HEK293T (cell line): ENCODE measurements at regions of chr10 and their contacts with region 1.

Region 1: DNA sequence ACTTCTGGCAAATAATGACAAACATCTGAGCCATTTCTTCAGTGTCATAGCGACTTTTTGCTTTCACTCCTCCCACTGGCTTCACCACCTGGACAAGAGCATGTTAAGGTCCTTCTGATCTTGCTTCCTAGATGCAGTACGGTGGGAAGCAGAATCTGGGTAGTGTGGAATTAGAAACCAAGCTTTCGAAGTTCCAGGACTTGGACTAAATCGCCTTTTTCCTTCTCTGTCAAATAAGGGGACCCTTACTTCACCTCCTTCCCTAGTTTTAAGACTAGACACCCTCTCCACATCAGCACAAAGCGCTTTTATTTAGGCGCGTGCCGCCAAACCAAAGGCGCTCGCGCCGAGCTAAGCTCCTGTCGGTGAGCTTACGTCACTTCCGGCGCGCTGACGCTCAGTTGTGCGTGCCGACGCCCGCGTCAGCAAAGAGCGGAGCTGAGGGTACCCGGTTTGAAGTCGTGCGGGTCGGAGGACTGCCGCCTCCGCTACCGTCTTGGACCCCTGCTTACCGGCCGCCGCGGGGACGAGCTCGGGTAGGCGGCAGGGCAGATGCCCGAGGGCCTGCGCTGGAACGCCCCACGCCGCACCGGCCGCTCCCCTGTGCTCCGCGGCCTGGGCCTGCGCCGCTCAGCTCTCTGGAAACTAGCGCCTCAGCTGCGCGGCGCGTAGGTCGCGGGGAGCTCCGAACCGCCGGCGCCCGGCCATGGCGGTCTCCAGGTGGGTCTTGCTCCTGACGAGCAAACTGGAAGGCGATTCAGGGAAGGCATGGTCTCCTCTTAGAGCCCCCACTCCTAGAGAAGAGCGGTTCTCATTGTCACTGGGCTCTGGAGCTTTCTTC is at the start of gene BTAF1:
- DNase-seq: peak; percentile 92

Region 2: DNA sequence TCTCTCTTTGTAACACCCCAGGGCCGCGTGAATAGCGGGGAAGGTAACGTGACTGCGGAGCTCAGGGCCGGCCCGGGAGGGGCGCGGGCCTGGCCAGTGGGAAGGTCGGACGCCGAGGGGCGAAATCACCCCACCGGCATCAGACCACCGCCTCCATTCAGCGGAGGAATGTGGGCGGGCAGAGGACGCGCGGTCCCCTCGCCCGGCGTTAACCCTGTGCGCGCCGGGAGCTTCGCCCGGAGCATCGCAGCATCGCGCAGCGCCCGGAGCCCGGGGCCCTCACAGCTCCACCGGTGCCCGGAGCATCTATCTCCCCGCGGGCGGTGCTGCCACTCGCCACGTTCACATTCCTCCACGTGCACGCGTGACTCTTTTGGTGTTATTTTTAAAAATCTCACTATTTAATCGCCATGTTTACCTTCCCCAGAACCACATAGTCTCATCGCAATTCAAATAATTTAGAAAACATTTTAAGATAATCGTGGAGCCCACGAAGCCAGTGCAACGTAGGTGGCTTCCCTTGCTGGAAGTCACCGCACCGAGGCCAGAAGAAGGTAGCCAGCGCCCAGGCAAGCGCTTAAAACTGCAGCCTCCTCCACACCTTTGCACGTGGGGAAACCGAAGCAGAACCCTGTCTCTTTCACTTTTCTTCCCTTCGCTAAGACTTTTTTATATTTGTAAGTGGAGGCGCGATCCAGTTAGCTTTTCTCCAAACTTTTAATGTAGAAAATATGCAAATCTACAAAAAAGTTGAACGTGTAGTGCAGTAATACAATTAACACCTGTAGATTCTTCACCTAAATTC is 36.1 kb before region 1 on chr10:
- CTCF ChIA-PET with region 1: no interaction called
- POLR2A ChIA-PET with region 1: interaction called, 15 read pairs
- DNase-seq: peak; percentile 63

Region 3: GRCh38 chr10:91908337-91909116 is 15.1 kb before region 1 on chr10:
- CTCF ChIA-PET with region 1: interaction called, 6 read pairs
- POLR2A ChIA-PET with region 1: interaction called, 17 read pairs
- DNase-seq: peak; percentile 80

Region 4: DNA sequence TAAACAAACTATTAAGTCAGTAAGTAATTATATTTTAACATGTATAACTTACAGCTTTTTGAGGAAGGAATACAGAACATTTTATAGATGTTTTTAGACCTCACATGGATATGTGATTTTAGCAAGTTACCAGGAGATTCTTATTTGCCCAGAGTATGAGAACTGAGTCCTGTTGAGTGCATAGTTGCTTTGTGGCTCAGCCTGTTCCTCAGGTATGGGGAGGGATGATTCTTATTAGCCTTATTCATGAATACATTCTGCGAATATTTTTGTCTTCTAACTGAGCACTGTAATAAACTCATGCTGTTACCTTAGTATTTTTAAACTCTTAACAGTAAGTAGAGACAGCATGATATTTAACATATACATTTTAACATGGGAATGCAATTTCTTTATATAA is 17.8 kb after region 1 on chr10:
- CTCF ChIA-PET with region 1: no interaction called
- POLR2A ChIA-PET with region 1: interaction called, 17 read pairs
- DNase-seq: no peak